Dendritic cell treated with granulocyte-macrophage colony-stimulating factor and Interleukin-4, amounts not matched to agents 40 ng/mL and 50 ng/mL, for 4 days (primary cell): ENCODE measurements at regions of chr5 and their contacts with region 1.

Region 1: DNA sequence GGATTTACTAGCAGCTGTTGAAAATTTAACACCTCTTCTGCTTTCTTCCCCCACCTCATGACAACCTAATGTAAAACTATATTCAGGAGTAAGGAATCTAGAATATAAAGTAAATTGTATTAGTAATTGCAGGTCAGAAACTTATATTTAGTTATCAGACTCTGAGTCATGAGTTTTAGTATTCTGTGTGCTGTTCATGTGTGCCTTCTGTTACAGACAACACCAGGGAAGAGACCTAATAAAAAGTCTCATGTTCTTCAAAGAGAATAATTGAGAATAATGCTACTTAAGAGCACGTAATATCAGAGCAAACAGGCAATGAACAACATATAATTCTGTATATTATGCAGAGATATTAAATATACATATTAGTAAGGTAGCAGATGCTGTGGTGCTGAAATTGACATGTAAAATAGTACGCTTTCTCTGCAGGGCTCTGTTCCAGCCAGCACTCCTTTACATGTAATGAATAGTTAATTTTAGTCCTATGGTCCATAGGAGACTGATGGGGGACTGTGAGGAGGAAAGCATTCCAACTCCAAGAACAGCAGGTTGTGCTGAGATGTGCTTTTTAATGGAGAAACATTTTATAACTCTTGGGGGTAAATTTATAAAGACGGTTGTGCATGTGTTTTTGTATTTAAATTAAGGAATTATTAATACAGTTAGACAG is 106.4 kb downstream of the ZSWIM6 start:
- H3K4me3 Mint-ChIP-seq: no peak overlapping the region
- H3K27ac Mint-ChIP-seq: no peak overlapping the region
- H3K4me1 Mint-ChIP-seq: peaks cover 19% of the 10 kb centered on the region
- H3K27me3 Mint-ChIP-seq: no peaks in the 10 kb centered on the region

Region 2: GRCh38 chr5:61401726-61402125 is 36.7 kb before region 1 on chr5:
- intact Hi-C with region 1: loop called (anchors 5 kb)
- H3K4me3 Mint-ChIP-seq: no peak overlapping the region
- H3K27ac Mint-ChIP-seq: no peak overlapping the region
- H3K4me1 Mint-ChIP-seq: peaks cover 56% of the 10 kb centered on the region
- H3K27me3 Mint-ChIP-seq: no peaks in the 10 kb centered on the region